Activated T-helper 2 cell treated with anti-CD3 and anti-CD28 coated beads, Interferon-gamma antibody, Interleukin-2, Interleukin-4, amounts not matched to agents 10 μg/mL and 5 μg/mL and 100 μg/mL, durations not matched to agents 14 hours and 24 hours and 36 hours (primary cell): ENCODE measurements at regions of chr20 and their contacts with region 1.

Region 1: DNA sequence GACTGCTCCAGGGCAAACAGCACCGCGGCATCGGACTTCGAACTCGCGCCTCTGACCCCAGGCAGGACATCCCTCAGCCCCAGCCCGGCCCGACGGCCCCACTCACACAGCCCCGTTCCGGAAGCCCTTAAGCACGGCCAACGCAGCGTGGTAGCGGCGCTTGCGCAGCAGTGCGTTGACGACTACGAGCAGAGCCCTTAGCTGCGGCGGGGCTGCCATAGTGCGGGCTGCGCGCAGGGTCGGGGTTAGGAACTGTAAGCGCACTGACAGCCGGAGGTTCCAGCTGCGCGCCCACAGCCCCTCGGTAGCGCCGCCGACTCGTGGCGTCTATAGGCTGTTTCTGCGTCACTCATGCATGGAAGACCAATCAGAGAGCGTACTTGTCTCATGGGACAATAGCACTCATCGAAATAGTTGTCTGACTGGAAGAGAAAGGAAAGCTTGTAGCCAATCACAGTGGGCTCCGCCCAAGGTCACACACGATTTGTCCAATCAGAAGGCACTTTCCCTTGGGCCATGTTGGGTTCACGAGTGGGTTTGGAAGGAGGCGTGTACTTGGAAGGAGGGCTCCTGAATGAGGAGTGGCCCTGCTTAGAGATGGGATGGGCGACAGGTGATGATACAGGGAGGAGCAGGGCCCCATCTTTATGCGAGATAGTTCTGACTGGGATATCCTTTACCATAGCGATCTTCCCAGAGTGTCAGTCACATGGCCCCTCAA is at the start of gene PXMP4:
- DNase-seq: peak; percentile 91
- H3K4me3 Mint-ChIP-seq: peak within 1 kb of the TSS; percentile 82
- H3K27ac Mint-ChIP-seq: peak within 1 kb of the TSS; percentile 92
- H3K4me1 Mint-ChIP-seq: peaks cover 14% of the 10 kb centered on the region
- H3K27me3 Mint-ChIP-seq: no peaks in the 10 kb centered on the region
- total RNA-seq, gene PXMP4: 7.4 TPM in 2 replicates

Region 2: GRCh38 chr20:33460711-33461110 is 259.4 kb before region 1 on chr20:
- intact Hi-C with region 1: no loop called
- DNase-seq: no peak
- H3K4me3 Mint-ChIP-seq: no peak overlapping the region
- H3K27ac Mint-ChIP-seq: no peak overlapping the region
- H3K4me1 Mint-ChIP-seq: no peaks in the 10 kb centered on the region
- H3K27me3 Mint-ChIP-seq: no peaks in the 10 kb centered on the region

Region 3: GRCh38 chr20:33731693-33732165 is 11.6 kb after region 1 on chr20 and contains the start of gene ZNF341:
- intact Hi-C with region 1: loop called (anchors 1 kb)
- DNase-seq: peak; percentile 88
- H3K4me3 Mint-ChIP-seq: peak within 1 kb of the TSS; percentile 89
- H3K27ac Mint-ChIP-seq: peak within 1 kb of the TSS; percentile 94
- H3K4me1 Mint-ChIP-seq: peaks cover 18% of the 10 kb centered on the region
- H3K27me3 Mint-ChIP-seq: no peaks in the 10 kb centered on the region
- total RNA-seq, gene ZNF341: 6.8 and 7.0 TPM in 2 replicates